ENCODE measurements at regions of chr2 and their contacts with region 1.

Region 1: DNA sequence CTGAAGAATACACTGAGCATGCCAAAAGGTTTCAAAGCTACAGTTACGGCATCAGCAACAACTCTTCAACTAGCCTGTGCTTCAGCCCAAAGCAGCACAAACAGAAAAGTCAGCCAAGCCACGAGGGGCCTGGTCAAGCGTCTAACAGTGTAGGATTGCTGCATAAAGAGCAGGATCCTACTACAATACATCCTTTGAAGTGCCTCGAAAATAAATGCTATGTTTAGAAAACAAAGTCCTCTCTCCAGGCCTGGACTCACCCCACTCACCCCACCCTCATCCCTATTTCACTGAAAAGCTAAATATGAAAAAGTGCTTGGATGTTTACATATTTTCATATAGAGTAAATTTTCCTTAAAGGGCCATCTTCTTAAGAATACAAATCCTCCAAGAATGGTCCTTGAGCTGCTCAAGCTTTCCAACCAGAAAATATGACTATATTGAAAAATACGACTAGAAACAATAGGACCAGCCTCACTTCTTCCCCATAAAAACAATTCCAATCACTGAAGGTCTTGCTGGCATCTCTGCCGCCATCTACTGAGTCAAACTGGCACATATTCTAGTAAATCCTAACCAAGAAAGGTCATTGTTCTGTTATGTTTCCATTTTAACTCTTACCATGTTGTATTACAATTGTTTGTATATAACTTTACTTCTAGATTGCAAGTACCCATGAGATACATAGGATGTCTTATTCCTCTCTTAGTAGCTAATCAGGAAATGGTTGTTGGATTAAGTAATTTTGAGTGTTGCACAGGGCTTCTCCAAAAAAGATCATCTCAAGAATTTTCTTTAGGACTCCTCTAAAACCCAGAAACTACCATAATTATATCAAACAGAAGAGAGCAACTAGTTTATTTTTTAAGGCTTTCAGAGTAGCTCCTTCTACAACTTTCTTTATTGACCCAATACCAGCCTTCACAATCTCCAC is 63.6 kb downstream of the CLHC1 start:
- DNase-seq: peak; percentile 10
- H3K4me3 Mint-ChIP-seq: no peak overlapping the region
- H3K27ac Mint-ChIP-seq: no peak overlapping the region
- H3K4me1 Mint-ChIP-seq: peaks cover 6% of the 10 kb centered on the region
- H3K27me3 Mint-ChIP-seq: no peaks in the 10 kb centered on the region

Region 2: DNA sequence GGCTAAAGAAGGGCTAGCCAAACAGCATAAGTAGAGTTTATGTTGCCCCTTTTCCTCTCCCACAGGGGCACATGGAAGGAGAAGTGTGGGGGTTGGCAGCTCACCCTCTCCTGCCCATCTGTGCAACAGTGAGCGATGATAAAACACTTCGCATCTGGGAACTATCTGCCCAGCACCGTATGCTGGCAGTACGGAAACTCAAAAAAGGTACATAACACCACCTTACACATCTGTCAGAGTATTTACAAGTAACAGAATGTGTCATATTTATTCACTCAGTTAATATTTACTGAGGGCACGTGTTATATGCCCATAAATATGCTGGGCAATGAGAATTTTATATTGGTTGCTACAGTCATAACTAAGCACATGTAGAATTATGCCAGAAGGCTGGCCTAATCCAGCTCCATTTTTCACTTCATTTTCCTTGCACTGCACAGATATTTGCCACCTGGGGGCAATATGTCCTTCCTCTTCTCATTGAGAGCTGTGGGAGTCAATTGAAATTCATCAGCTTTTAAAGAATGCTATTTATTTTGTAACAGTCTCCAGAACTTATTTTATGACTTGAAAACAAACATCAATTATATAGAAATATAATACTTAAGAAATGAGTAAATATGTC is 268.8 kb before region 1 on chr2:
- intact Hi-C with region 1: loop called (anchors 5 kb)
- DNase-seq: no peak
- H3K4me3 Mint-ChIP-seq: no peak overlapping the region
- H3K27ac Mint-ChIP-seq: no peak overlapping the region
- H3K4me1 Mint-ChIP-seq: peaks cover 24% of the 10 kb centered on the region
- H3K27me3 Mint-ChIP-seq: no peaks in the 10 kb centered on the region

Region 3: GRCh38 chr2:55014962-55015939 is 153.2 kb before region 1 on chr2:
- intact Hi-C with region 1: loop called (anchors 1 kb)
- DNase-seq: no peak
- H3K4me3 Mint-ChIP-seq: no peak overlapping the region
- H3K27ac Mint-ChIP-seq: no peak overlapping the region
- H3K4me1 Mint-ChIP-seq: peaks cover 22% of the 10 kb centered on the region
- H3K27me3 Mint-ChIP-seq: no peaks in the 10 kb centered on the region